GM13977 (cell line): ENCODE measurements at regions of chr3 and their contacts with region 1.

Region 1: GRCh38 chr3:4021162-4021561 is 221.9 kb downstream of the LRRN1 start:
- DNase-seq: no peak
- CTCF ChIP-seq: no peak

Region 2: DNA sequence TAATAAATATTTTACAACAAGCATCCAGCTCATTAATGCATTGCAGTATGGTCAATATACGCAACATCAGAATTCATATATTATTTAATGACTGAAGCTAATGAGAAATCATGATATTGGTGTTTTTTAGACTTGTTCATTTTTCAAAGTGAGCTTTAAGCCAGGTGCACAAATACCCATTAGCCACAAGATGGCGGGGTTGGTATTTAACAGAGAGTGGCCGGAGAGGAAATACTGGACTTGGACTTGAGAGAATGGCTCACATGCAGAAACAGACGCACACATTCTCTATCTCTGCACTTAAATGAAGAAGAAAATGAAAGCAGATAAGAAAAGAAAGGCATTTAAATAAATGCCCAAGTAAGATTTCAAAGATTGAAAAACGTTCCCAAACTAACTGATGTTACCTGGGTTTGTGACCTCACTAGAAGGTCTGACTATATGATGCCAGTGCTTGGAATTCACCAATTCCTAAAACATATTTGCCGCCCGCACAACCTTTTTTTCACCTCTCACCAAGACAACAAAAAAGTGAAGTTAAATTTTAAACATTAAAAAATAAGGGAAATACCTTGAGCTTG is 820.4 kb before region 1 on chr3:
- in situ Hi-C with region 1: loop called (anchors 25 kb)
- DNase-seq: peak; percentile 23
- CTCF ChIP-seq: peak; percentile 79